Activated CD8-positive, alpha-beta T cell treated with anti-CD3 and anti-CD28 coated beads, Interleukin-2, amount 10 ng/mL, durations not matched to agents 7 days and 5 days (primary cell): ENCODE measurements at regions of chr1 and their contacts with region 1.

Region 1: GRCh38 chr1:206489980-206490770 is 17.2 kb upstream of the RASSF5 start:
- DNase-seq: peak; percentile 78
- ATAC-seq: peak; percentile 84
- H3K4me3 Mint-ChIP-seq: no peak overlapping the region
- H3K27ac Mint-ChIP-seq: peak overlapping the region; percentile 68
- H3K4me1 Mint-ChIP-seq: peaks cover 21% of the 10 kb centered on the region
- H3K27me3 Mint-ChIP-seq: no peaks in the 10 kb centered on the region

Region 2: DNA sequence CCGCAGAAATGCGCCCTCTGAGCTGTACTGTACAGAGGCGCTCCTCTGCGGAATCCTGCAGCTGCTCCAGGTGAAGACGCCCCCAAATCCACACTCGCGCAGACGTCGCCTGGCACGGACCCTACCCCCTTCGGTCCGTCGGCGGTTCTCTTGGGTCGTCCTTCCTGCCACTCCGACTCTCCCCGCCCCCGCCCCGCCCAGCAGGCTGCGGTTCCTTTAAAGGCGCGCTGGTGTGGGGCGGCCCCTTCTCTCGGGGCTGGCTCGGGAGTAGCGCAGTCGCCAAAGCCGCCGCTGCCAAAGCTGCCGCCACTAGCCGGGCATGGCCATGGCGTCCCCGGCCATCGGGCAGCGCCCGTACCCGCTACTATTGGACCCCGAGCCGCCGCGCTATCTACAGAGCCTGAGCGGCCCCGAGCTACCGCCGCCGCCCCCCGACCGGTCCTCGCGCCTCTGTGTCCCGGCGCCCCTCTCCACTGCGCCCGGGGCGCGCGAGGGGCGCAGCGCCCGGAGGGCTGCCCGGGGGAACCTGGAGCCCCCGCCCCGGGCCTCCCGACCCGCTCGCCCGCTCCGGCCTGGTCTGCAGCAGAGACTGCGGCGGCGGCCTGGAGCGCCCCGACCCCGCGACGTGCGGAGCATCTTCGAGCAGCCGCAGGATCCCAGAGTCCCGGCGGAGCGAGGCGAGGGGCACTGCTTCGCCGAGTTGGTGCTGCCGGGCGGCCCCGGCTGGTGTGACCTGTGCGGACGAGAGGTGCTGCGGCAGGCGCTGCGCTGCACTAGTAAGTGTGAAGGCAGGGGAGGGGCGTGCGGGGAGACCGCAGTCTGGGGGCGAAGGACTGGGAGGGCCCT is 17.3 kb after region 1 on chr1 and contains the start of gene RASSF5:
- CTCF ChIA-PET with region 1: interaction called, 14 read pairs
- POLR2A ChIA-PET with region 1: interaction called, 6 read pairs
- DNase-seq: peak; percentile 87
- ATAC-seq: peak; percentile 90
- H3K4me3 Mint-ChIP-seq: peak within 1 kb of the TSS; percentile 73
- H3K27ac Mint-ChIP-seq: no peak within 1 kb of the TSS
- H3K4me1 Mint-ChIP-seq: peaks cover 45% of the 10 kb centered on the region
- H3K27me3 Mint-ChIP-seq: peaks cover 25% of the 10 kb centered on the region
- total RNA-seq, gene RASSF5: 192 to 195 TPM